OCI-LY7 (cell line): ENCODE measurements at regions of chr2 and their contacts with region 1.

Region 1: GRCh38 chr2:19863303-19864041 is 38.3 kb downstream of the TTC32 start:
- DNase-seq: peak; percentile 42
- H3K4me3 ChIP-seq: no peak overlapping the region
- H3K27ac ChIP-seq: no peak overlapping the region
- H3K4me1 ChIP-seq: no peaks in the 10 kb centered on the region
- CTCF ChIP-seq: peak; percentile 90

Region 2: GRCh38 chr2:18435421-18436037 is 1427.9 kb before region 1 on chr2:
- CTCF ChIA-PET with region 1: no interaction called
- POLR2A ChIA-PET with region 1: no interaction called
- intact Hi-C with region 1: loop called (anchors 2 kb)
- DNase-seq: peak; percentile 36
- H3K4me3 ChIP-seq: no peak overlapping the region
- H3K27ac ChIP-seq: no peak overlapping the region
- H3K4me1 ChIP-seq: no peaks in the 10 kb centered on the region
- CTCF ChIP-seq: peak; percentile 90

Region 3: GRCh38 chr2:18520451-18521425 is 1342.7 kb before region 1 on chr2:
- CTCF ChIA-PET with region 1: no interaction called
- POLR2A ChIA-PET with region 1: no interaction called
- intact Hi-C with region 1: loop called (anchors 2 kb)
- DNase-seq: peak; percentile 58
- H3K4me3 ChIP-seq: no peak overlapping the region
- H3K27ac ChIP-seq: no peak overlapping the region
- H3K4me1 ChIP-seq: no peaks in the 10 kb centered on the region
- CTCF ChIP-seq: peak; percentile 89

Region 4: DNA sequence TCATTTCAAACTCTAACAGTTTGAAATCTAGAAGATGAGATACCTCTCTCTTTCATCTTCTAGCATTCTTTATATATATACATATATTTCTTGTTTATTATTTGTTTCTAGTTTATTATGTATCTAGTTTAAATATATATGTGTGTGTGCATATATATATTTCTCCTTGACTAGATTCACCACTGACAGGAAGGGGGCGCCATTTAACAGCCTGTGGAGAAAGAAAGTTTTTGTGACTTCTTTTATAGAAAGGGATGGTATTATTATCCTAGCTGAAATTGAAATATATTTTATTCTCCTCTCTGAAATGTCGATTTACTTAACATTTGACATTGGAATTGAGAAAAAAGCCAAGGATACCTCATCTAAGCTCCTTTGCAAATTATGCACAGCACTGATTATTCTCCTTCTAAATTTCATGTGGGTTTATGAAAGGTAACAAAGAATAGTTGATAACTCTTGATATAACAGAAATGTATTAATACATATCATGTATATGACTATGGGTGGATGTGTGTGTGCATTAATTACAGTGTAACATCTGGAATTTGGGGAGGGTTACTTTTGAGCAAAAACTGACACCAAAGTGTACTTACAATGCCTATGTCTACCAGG is 1113.5 kb before region 1 on chr2:
- CTCF ChIA-PET with region 1: no interaction called
- POLR2A ChIA-PET with region 1: no interaction called
- intact Hi-C with region 1: loop called (anchors 1 kb)
- DNase-seq: peak; percentile 53
- H3K4me3 ChIP-seq: no peak overlapping the region
- H3K27ac ChIP-seq: no peak overlapping the region
- H3K4me1 ChIP-seq: no peaks in the 10 kb centered on the region
- CTCF ChIP-seq: peak; percentile 94

Region 5: DNA sequence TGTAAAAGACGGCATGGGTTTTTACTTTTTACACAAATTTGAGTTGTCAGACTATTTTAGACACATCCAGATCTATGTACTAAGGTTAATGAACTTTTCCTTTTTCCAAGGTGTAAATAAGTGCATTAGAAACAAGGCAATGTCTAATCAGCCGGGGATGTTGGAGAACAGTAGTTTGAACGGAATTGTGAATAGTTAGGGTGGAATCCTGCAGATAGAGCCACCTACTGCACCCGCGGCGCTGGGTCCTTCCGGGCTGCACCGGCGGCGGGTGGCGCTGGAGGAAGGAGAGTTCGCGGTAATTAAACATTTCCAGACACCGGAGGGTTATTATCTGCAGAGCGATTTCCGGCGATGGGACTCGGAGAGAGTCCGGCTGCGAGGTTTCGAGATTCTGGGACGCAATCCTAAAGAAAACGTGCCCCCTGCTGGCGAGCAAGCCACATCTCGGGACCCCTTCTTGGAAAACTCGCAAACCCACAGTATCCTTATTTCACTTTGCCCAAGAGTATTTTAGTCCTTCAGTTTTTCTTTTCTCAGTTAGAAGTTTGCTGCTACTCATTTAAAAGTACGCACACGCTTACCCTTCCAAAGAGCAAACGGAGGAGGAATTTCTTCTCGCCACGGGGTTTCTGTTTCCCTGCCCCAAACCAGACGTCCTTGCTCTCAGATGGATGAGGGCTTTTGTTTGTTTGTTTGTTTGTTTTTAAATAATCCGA is 500.6 kb before region 1 on chr2:
- CTCF ChIA-PET with region 1: no interaction called
- POLR2A ChIA-PET with region 1: no interaction called
- intact Hi-C with region 1: loop called (anchors 5 kb)
- DNase-seq: peak; percentile 67
- H3K4me3 ChIP-seq: peak overlapping the region; percentile 63
- H3K27ac ChIP-seq: no peak overlapping the region
- H3K4me1 ChIP-seq: no peaks in the 10 kb centered on the region
- CTCF ChIP-seq: peak; percentile 77

Region 6: GRCh38 chr2:19769513-19769912 is 94.0 kb before region 1 on chr2:
- CTCF ChIA-PET with region 1: no interaction called
- POLR2A ChIA-PET with region 1: no interaction called
- intact Hi-C with region 1: loop called (anchors 10 kb)
- DNase-seq: peak; percentile 3
- H3K4me3 ChIP-seq: no peak overlapping the region
- H3K27ac ChIP-seq: no peak overlapping the region
- H3K4me1 ChIP-seq: no peaks in the 10 kb centered on the region
- CTCF ChIP-seq: peak; percentile 63

Region 7: DNA sequence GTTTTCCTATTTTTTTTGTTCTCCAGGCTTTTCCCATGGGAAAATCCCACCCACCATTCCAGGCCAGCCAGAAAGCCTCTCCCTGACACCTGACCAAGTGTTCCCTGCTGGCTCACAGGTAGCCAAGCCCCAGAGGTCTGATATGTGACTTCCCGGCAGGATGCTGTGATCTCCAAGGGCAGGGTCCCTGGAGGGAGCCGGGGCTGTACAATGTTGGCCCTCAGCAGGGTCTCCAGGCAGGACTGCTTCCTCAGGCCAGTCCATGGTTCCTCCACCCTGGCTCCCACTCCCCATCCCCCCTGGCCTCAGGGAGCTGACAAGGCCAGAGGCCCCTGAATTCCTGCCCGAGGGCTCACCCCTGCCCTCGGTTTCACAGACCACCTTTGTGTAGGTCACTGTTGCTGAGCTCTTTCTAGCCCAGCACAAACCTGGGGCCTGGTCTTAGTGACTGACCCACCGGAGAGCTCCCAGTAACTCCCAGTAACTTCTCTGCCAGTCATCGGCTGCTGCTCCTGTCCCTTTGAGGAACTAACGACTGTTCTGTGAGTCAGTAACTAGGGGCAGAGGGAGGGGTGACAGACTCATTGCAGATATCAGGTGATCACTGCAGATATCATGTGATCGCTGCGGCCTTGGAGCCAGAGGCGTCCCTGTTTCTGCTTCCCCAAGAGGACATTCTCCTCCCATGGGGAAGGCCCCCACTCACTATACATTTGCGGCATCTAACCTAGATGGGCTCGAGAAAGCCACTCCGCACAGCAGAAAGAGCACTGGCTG is 322.8 kb after region 1 on chr2:
- CTCF ChIA-PET with region 1: no interaction called
- POLR2A ChIA-PET with region 1: no interaction called
- intact Hi-C with region 1: no loop called
- DNase-seq: no peak
- H3K4me3 ChIP-seq: no peak overlapping the region
- H3K27ac ChIP-seq: no peak overlapping the region
- H3K4me1 ChIP-seq: no peaks in the 10 kb centered on the region
- CTCF ChIP-seq: no peak